Right ventricle myocardium inferior (tissue), 1 donor: ENCODE measurements at regions of chr6 and their contacts with region 1.

Region 1: DNA sequence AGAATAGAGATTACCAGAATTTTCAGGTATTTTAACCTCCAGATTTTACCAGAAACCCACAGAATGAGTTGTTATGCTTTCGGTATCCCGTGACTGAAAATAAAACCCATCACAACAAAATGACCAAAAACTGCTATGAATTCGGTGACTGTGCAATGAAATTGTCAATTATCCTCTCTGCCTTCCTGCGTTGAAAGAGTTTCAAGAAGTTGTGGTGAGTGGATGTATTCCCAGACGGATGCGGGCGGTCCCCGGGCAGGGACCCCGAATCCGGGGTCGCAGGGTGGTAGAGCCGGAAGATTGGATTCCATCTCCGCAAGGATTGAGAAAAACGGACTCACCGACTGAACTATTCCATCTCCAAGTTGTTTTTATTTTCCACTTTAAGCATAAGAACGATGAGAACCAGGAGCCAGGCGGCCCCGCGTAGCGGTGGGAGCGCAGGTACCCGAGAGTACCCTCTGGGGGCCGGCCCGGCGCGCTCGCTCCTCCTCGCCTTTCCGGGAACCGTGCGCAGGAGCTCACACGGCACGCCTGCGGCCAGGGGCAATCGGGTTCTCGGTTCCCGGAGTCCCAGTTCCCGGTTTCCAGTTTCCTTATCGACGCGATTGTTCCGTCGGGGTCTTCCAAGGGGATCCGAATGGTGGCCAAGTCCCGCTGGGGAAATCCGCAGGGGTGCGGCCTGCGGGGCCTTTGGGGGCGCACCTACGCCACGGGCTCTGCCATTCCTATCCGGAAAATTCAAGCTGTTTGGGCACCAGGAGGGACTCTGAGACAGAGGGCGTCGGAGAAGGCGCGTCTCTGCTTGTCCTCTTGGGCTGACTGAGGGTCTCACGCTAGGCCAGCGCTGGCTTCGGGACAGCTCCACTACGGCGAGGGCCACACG is 104.9 kb upstream of the PRDM1 start:
- DNase-seq: peak; percentile 67
- ATAC-seq: no peak

Region 2: GRCh38 chr6:105015482-105015881 is 965.8 kb before region 1 on chr6:
- intact Hi-C with region 1: no loop called
- DNase-seq: no peak
- ATAC-seq: no peak

Region 3: GRCh38 chr6:105824732-105825131 is 156.5 kb before region 1 on chr6:
- intact Hi-C with region 1: no loop called
- DNase-seq: no peak
- ATAC-seq: no peak

Region 4: GRCh38 chr6:105917038-105917695 is 64.1 kb before region 1 on chr6:
- intact Hi-C with region 1: loop called (anchors 5 kb)
- DNase-seq: no peak
- ATAC-seq: peak; percentile 77